PC-3 (cell line): ENCODE measurements at regions of chr6 and their contacts with region 1.

Region 1: GRCh38 chr6:108492131-108492766 is 68.5 kb upstream of the FOXO3 start:
- DNase-seq: peak; percentile 57
- ATAC-seq: peak; percentile 60; the same call in 1 of the 2 replicates
- H3K4me3 ChIP-seq: no peak overlapping the region
- H3K27ac ChIP-seq: no peak overlapping the region
- H3K4me1 ChIP-seq: no peaks in the 10 kb centered on the region
- H3K27me3 ChIP-seq: no peaks in the 10 kb centered on the region
- CTCF ChIP-seq: peak; percentile 70

Region 2: DNA sequence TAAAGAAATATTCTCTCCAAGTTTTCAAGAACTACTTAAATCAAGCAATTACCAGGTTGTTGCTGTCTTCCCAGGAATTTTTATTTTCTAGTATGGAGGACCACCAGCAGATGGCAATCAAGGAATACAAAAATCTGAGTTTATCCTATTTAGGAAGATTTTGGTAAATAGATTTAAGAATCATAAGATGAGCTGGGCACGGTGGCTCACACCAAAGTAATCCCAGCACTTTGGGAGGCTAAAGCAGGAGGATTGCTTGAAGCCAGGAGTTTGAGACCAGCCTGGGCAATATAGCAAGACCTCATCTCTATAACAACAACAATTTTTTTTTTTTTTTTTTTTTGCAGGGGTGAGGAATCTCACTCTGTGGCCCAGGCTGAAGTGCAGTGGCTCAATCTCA is 515.0 kb before region 1 on chr6:
- CTCF ChIA-PET with region 1: interaction called, 8 read pairs
- POLR2A ChIA-PET with region 1: no interaction called
- intact Hi-C with region 1: loop called (anchors 10 kb)
- DNase-seq: peak; percentile 64
- ATAC-seq: peak; percentile 35; the same call in 1 of the 2 replicates
- H3K4me3 ChIP-seq: no peak overlapping the region
- H3K27ac ChIP-seq: no peak overlapping the region
- H3K4me1 ChIP-seq: 0 out of 2 replicates have a peak, but pooled peaks cover 3% of the 10 kb centered on the region
- H3K27me3 ChIP-seq: no peaks in the 10 kb centered on the region
- CTCF ChIP-seq: peak; percentile 59

Region 3: GRCh38 chr6:108250240-108250866 is 241.9 kb before region 1 on chr6:
- CTCF ChIA-PET with region 1: interaction called, 3 read pairs
- POLR2A ChIA-PET with region 1: no interaction called
- intact Hi-C with region 1: loop called (anchors 5 kb)
- DNase-seq: peak; percentile 21
- ATAC-seq: no peak
- H3K4me3 ChIP-seq: no peak overlapping the region
- H3K27ac ChIP-seq: no peak overlapping the region
- H3K4me1 ChIP-seq: no peaks in the 10 kb centered on the region
- H3K27me3 ChIP-seq: no peaks in the 10 kb centered on the region
- CTCF ChIP-seq: peak; percentile 44